ENCODE measurements at regions of chr1 and their contacts with region 1.

Region 1: DNA sequence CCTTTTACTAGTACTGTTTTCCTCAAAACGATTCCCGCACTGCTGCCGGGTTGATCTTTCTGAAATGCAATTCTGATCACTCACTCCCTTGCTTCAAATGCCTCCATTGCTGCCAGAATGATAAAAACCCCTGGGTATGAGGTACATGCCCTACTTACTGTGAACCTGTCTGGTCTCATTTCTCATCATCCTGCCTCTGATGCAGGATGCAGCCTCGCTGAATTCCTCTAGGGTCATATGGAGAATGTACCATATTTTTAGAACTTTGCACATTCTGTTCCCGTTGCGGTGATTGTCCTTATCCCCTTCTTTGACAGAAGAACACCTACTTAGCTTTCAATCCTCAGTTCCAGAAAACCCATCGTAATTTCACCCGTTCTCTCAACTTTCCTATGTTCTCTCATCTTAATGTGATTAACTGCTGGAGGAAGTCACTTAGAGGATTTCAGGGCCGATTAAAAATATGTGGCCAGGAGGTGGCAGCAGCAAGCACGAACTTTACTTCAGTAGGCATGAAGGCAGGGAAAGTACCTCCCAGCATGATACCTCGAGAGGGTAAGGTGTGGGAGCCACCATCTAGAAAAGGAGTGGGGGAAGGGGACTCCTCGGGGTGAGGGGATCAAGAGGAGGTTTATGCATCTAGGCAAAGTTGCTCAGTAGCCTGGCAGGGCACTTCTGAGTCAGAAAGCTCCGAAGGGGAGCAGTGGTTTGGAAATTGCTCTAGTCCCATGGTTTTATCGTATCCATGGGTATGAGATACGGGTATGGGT is 361.5 kb upstream of the ZP4 start:
- DNase-seq: peak; percentile 43
- H3K4me3 ChIP-seq: no peak overlapping the region
- H3K27ac ChIP-seq: no peak overlapping the region
- H3K4me1 ChIP-seq: no peaks in the 10 kb centered on the region
- H3K27me3 ChIP-seq: no peaks in the 10 kb centered on the region
- CTCF ChIP-seq: no peak

Region 2: GRCh38 chr1:238485057-238485911 is 233.1 kb after region 1 on chr1:
- intact Hi-C with region 1: no loop called
- DNase-seq: no peak
- H3K4me3 ChIP-seq: no peak overlapping the region
- H3K27ac ChIP-seq: no peak overlapping the region
- H3K4me1 ChIP-seq: no peaks in the 10 kb centered on the region
- H3K27me3 ChIP-seq: no peaks in the 10 kb centered on the region
- CTCF ChIP-seq: no peak

Region 3: GRCh38 chr1:238951809-238952208 is 699.6 kb after region 1 on chr1:
- intact Hi-C with region 1: loop called (anchors 10 kb)
- DNase-seq: peak; percentile 22
- H3K4me3 ChIP-seq: no peak overlapping the region
- H3K27ac ChIP-seq: no peak overlapping the region
- H3K4me1 ChIP-seq: no peaks in the 10 kb centered on the region
- H3K27me3 ChIP-seq: no peaks in the 10 kb centered on the region
- CTCF ChIP-seq: no peak

Region 4: GRCh38 chr1:239976130-239976968 is 1724.1 kb after region 1 on chr1:
- intact Hi-C with region 1: loop called (anchors 10 kb)
- DNase-seq: peak; percentile 48
- H3K4me3 ChIP-seq: no peak overlapping the region
- H3K27ac ChIP-seq: no peak overlapping the region
- H3K4me1 ChIP-seq: no peaks in the 10 kb centered on the region
- H3K27me3 ChIP-seq: no peaks in the 10 kb centered on the region
- CTCF ChIP-seq: peak; percentile 93

Measured in colonic mucosa (tissue), 4 donors.